ENCODE measurements at regions of chr19 and their contacts with region 1.

Region 1: DNA sequence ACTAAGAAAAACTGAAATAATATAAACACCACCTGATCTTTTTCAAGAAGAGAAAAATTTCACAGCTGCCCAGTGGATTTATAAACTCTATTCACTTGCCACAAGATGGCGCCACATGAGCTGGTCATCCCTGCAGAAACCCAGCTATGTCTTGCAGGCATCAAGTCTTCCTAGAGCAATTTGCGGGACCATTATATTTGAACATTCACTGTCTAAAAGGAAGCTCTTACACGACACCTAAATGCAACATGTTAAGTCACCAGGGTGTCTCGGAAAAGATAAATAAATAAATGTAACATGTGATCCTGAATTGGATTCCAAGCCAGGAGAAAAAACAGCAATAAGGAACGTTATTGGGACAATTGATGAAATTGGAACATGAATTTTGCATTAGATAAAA is 20.3 kb upstream of the AKT2 start:
- DNase-seq: peak; percentile 91
- H3K4me3 ChIP-seq: no peak overlapping the region
- H3K27ac ChIP-seq: no peak overlapping the region
- H3K4me1 ChIP-seq: peaks cover 4% of the 10 kb centered on the region
- CTCF ChIP-seq: peak; percentile 96

Region 2: DNA sequence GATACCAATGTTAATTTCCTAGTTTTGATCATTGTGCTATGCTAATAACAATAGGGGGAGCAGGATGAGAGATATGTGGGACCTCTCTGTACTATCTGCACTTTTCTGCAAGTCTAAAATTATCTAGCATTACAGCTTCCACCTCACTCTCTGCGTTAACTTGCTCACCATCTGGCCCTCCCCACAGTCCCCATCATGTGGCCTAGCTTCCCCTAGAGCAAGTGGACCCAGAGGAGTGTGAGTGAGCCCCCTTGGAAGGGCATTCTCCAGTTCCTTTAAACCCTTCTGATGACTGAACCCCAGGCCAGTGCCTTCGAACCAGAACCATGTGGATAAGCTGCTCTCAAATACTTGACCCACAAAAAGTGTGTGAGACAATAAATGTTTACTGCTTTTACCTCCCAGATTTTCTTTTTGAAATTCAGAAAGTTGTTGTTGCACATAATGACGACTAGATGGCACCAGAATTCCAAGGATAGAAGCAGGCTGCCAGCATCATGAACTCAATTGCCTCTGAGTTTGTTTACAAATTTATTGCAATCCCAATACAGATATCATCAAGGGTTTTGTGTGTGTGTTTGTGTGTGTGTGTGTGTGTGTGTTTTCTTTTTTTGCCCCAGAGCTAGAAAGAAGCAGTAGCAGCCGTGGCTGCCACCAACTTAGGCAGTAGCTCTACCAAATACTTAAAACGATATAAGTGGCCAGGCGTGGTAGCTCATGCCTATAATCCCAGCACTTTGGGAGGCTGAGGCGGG is 165.7 kb before region 1 on chr19:
- CTCF ChIA-PET with region 1: no interaction called
- POLR2A ChIA-PET with region 1: no interaction called
- intact Hi-C with region 1: loop called (anchors 2 kb)
- DNase-seq: peak; percentile 70
- H3K4me3 ChIP-seq: no peak overlapping the region
- H3K27ac ChIP-seq: no peak overlapping the region
- H3K4me1 ChIP-seq: peaks cover 26% of the 10 kb centered on the region
- CTCF ChIP-seq: peak; percentile 93

Region 3: GRCh38 chr19:40392872-40393845 is 87.8 kb after region 1 on chr19:
- CTCF ChIA-PET with region 1: no interaction called
- POLR2A ChIA-PET with region 1: no interaction called
- intact Hi-C with region 1: no loop called
- DNase-seq: peak; percentile 51
- H3K4me3 ChIP-seq: no peak overlapping the region
- H3K27ac ChIP-seq: no peak overlapping the region
- H3K4me1 ChIP-seq: peaks cover under 1% of the 10 kb centered on the region
- CTCF ChIP-seq: peak; percentile 63

Region 4: DNA sequence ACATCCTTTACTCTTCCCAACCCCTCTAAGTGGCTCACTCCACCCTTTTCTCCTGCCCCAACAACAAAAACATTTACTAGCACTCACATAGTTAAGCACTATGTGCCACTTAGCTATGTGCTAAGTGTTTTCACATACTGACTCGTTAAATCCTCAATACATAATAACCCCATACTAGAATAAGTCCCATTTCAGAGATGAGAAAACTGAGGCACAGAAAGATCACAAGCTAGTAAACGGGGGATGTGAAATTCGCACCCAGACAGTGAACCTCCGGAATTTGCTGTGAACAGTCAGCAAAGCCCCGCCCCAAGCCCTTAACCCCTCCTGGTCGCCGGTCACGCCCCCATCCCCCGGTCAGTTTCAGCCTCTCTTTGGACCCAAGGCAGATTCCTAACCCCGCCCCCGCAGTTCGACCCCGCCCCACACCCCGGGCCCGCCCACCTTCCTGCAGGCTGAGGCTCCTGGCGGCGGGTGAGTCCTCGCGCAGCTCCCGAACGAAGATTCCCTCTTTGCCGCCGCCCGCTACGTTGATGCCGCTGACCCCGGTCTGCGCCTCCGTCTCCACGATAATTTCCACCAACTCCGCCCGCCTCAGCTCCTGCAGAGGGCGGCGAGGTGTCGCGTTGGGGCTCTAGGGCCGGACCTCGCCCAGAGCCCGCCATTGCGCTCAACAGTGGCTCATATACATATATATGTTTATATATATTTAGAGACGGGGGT is 98.0 kb after region 1 on chr19:
- CTCF ChIA-PET with region 1: no interaction called
- POLR2A ChIA-PET with region 1: no interaction called
- intact Hi-C with region 1: loop called (anchors 10 kb)
- DNase-seq: peak; percentile 93
- H3K4me3 ChIP-seq: peak overlapping the region; percentile 73
- H3K27ac ChIP-seq: peak overlapping the region; percentile 66
- H3K4me1 ChIP-seq: peaks cover 28% of the 10 kb centered on the region
- CTCF ChIP-seq: no peak

Region 5: GRCh38 chr19:40465557-40466150 is 160.3 kb after region 1 on chr19 and contains the start of gene BLVRB:
- CTCF ChIA-PET with region 1: no interaction called
- POLR2A ChIA-PET with region 1: no interaction called
- intact Hi-C with region 1: loop called (anchors 5 kb)
- DNase-seq: peak; percentile 99
- H3K4me3 ChIP-seq: peak within 1 kb of the TSS; percentile 78
- H3K27ac ChIP-seq: peak within 1 kb of the TSS; percentile 29
- H3K4me1 ChIP-seq: peaks cover 43% of the 10 kb centered on the region
- CTCF ChIP-seq: no peak
- total RNA-seq, gene BLVRB: 46.0 and 48.5 TPM in 2 replicates

Region 6: GRCh38 chr19:40598121-40598917 is 292.9 kb after region 1 on chr19:
- CTCF ChIA-PET with region 1: no interaction called
- POLR2A ChIA-PET with region 1: no interaction called
- intact Hi-C with region 1: loop called (anchors 2 kb)
- DNase-seq: peak; percentile 80
- H3K4me3 ChIP-seq: peak overlapping the region; percentile 62
- H3K27ac ChIP-seq: no peak overlapping the region
- H3K4me1 ChIP-seq: peaks cover 57% of the 10 kb centered on the region
- CTCF ChIP-seq: peak; percentile 98

Measured in OCI-LY7 (cell line).